ENCODE measurements at regions of chr6 and their contacts with region 1.

Region 1: GRCh38 chr6:70706491-70707123 is 38.9 kb downstream of the SMAP1 start:
- DNase-seq: no peak
- ATAC-seq: no peak

Region 2: GRCh38 chr6:70059039-70059719 is 647.4 kb before region 1 on chr6:
- intact Hi-C with region 1: no loop called
- DNase-seq: no peak
- ATAC-seq: no peak

Region 3: GRCh38 chr6:70884074-70884983 is 177.7 kb after region 1 on chr6:
- intact Hi-C with region 1: loop called (anchors 2 kb)
- DNase-seq: peak; percentile 62
- ATAC-seq: peak; percentile 84

Measured in left ventricle myocardium superior (tissue), 1 donor.